PC-3 (cell line): ENCODE measurements at regions of chr12 and their contacts with region 1.

Region 1: GRCh38 chr12:121793838-121794533 is 498 bp upstream of the RHOF start:
- DNase-seq: peak; percentile 98
- ATAC-seq: peak; percentile 19
- H3K4me3 ChIP-seq: peak overlapping the region; percentile 84
- H3K27ac ChIP-seq: peak overlapping the region; percentile 96
- H3K4me1 ChIP-seq: peaks cover 80% of the 10 kb centered on the region
- H3K27me3 ChIP-seq: no peaks in the 10 kb centered on the region
- CTCF ChIP-seq: peak; percentile 99

Region 2: GRCh38 chr12:121626087-121626852 is 167.7 kb before region 1 on chr12 and contains the start of gene ORAI1:
- CTCF ChIA-PET with region 1: no interaction called
- POLR2A ChIA-PET with region 1: no interaction called
- intact Hi-C with region 1: loop called (anchors 5 kb)
- DNase-seq: peak; percentile 99
- ATAC-seq: peak; percentile 70
- H3K4me3 ChIP-seq: peak within 1 kb of the TSS; percentile 79
- H3K27ac ChIP-seq: peak within 1 kb of the TSS; percentile 29
- H3K4me1 ChIP-seq: peaks cover 34% of the 10 kb centered on the region
- H3K27me3 ChIP-seq: no peaks in the 10 kb centered on the region
- CTCF ChIP-seq: no peak
- total RNA-seq, gene ORAI1: 31.4 and 35.0 TPM in 2 replicates

Region 3: DNA sequence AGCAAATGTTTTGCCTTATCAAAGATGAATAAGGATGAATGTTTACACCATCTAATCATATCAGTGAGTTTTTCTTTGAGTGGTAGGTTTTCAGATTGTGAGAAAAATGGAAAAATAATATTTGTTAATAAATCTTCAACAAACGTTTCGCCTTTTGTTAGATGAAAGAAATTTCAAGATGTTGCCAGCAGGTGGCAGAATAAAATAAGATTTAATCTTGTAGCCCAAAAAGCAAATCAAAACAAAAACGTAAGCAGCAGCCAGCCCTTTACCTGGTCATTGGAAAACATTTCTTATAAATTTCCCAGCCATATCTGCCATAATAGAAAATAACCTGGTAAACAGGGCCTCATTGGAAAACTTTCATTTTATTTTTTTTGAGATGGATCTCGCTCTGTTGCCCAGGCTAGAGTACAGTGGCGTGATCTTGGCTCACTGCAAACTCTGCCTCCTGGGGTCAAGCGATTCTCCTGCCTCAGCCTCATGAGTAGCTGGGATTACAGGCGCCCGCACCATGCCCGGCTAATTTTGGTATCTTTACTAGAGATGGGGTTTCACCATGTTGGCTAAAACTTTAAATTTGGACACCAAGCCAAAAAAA is 96.8 kb before region 1 on chr12:
- CTCF ChIA-PET with region 1: interaction called, 8 read pairs
- POLR2A ChIA-PET with region 1: no interaction called
- intact Hi-C with region 1: loop called (anchors 1 kb)
- DNase-seq: peak; percentile 88
- ATAC-seq: peak; percentile 53
- H3K4me3 ChIP-seq: no peak overlapping the region
- H3K27ac ChIP-seq: no peak overlapping the region
- H3K4me1 ChIP-seq: no peaks in the 10 kb centered on the region
- H3K27me3 ChIP-seq: no peaks in the 10 kb centered on the region
- CTCF ChIP-seq: peak; percentile 79

Region 4: GRCh38 chr12:121765573-121765972 is 28.4 kb before region 1 on chr12:
- CTCF ChIA-PET with region 1: no interaction called
- POLR2A ChIA-PET with region 1: interaction called, 13 read pairs
- intact Hi-C with region 1: no loop called
- DNase-seq: peak; percentile 79
- ATAC-seq: peak; percentile 92
- H3K4me3 ChIP-seq: no peak overlapping the region
- H3K27ac ChIP-seq: no peak overlapping the region
- H3K4me1 ChIP-seq: peaks cover 9% of the 10 kb centered on the region
- H3K27me3 ChIP-seq: no peaks in the 10 kb centered on the region
- CTCF ChIP-seq: no peak

Region 5: GRCh38 chr12:121811434-121812319 is 17.7 kb after region 1 on chr12:
- CTCF ChIA-PET with region 1: interaction called, 95 read pairs
- POLR2A ChIA-PET with region 1: interaction called, 4 read pairs
- intact Hi-C with region 1: loop called (anchors 1 kb)
- DNase-seq: peak; percentile 84
- ATAC-seq: peak; percentile 79
- H3K4me3 ChIP-seq: peak overlapping the region; percentile 70
- H3K27ac ChIP-seq: peak overlapping the region; percentile 19
- H3K4me1 ChIP-seq: peaks cover 34% of the 10 kb centered on the region
- H3K27me3 ChIP-seq: no peaks in the 10 kb centered on the region
- CTCF ChIP-seq: peak; percentile 97

Region 6: DNA sequence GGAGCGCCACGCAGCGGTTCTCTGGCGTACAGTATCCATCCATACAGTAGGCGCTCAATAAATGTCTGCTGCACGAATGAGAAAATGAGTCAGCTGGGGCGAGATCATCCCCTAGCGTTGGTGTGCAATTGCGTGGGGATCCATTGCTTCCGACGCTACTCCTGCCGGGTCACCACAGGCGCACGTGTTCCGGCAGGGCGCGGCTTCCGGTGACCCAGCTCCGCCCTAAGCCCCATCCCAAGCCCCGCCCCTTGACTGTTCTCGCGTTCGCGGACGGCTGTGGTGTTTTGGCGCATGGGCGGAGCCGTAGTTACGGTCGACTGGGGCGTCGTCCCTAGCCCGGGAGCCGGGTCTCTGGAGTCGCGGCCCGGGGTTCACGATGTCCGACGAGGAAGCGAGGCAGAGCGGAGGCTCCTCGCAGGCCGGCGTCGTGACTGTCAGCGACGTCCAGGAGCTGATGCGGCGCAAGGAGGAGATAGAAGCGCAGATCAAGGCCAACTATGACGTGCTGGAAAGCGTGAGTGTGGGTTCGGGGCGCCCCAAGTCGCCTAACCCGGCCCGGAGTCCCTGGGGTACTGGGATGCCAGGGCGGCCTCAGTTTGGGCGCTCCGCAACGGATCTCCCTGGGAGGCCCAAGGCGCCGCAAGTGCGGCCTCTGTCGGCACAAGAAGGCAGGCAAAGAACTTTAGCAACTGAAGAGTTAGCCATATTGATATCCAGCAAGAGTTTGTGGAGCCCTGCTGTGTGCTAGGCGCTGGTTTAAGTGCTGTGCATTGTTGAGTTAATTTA is 94.7 kb after region 1 on chr12 and contains the start of gene PSMD9:
- CTCF ChIA-PET with region 1: interaction called, 20 read pairs
- POLR2A ChIA-PET with region 1: interaction called, 5 read pairs
- intact Hi-C with region 1: loop called (anchors 1 kb)
- DNase-seq: peak; percentile 99
- ATAC-seq: peak; percentile 90
- H3K4me3 ChIP-seq: peak within 1 kb of the TSS; percentile 90
- H3K27ac ChIP-seq: peak within 1 kb of the TSS; percentile 81
- H3K4me1 ChIP-seq: peaks cover 26% of the 10 kb centered on the region
- H3K27me3 ChIP-seq: no peaks in the 10 kb centered on the region
- CTCF ChIP-seq: peak; percentile 73
- total RNA-seq, gene PSMD9: 241 and 258 TPM in 2 replicates

Region 7: GRCh38 chr12:121955258-121956235 is 161.6 kb after region 1 on chr12:
- CTCF ChIA-PET with region 1: no interaction called
- POLR2A ChIA-PET with region 1: interaction called, 10 read pairs
- intact Hi-C with region 1: no loop called
- DNase-seq: peak; percentile 67
- ATAC-seq: peak; percentile 52
- H3K4me3 ChIP-seq: no peak overlapping the region
- H3K27ac ChIP-seq: no peak overlapping the region
- H3K4me1 ChIP-seq: peaks cover 6% of the 10 kb centered on the region; the same call in 1 of the 2 replicates
- H3K27me3 ChIP-seq: no peaks in the 10 kb centered on the region
- CTCF ChIP-seq: peak; percentile 91